ENCODE measurements at regions of chr6 and their contacts with region 1.

Region 1: DNA sequence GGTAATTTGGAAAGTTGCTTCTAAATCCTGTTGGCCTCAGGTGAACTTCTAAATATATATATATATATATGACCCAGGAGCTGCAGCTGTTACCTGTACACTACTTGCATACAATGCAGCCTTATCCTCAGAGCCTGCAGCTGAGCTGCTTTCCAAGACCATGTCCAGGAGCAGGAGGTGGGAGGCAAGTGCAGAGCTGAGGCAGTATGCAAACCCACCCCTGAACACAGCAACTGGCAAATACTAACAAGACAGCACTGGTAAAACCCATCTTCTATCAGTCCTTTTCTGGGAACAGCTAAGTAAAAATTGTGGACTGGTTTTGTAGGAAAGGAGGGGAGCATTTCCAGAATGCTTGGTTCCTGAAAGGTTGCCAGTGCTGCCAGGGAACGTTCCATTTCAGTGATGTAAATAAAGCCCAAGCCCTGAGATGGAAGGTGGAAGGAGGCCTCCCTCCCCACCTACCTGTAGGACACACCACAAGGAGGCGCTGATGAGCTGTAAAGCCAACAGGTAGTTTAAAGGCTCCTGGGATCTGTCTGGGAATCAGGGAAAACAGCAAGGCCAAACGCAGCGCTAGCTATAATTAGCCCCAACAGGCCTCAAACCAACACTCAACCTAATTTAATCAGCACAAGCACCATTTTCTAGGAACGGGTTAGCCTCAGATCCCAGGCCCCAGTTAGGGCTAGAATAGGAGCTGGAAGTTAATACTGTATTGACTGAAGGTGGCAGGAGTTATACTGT is 93.8 kb upstream of the MAP7 start:
- DNase-seq: peak; percentile 67 to 75
- ATAC-seq: peak; percentile 92 to 95
- H3K4me3 ChIP-seq: no peak overlapping the region
- H3K27ac ChIP-seq: peak overlapping the region in 2 of 4 donors; percentile 40 to 65
- H3K4me1 ChIP-seq: peaks cover 8 to 29% of the 10 kb centered on the region in 2 donors
- H3K27me3 ChIP-seq: no peaks in the 10 kb centered on the region
- CTCF ChIP-seq: peak; percentile 61 to 89 (median 82)
- POLR2A ChIP-seq: no peak

Region 2: GRCh38 chr6:136582711-136583471 is 61.1 kb before region 1 on chr6:
- in situ Hi-C with region 1: no loop called
- intact Hi-C with region 1: loop called (anchors 2 kb)
- DNase-seq: no peak
- ATAC-seq: peak; percentile 50 to 69
- H3K4me3 ChIP-seq: no peak overlapping the region
- H3K27ac ChIP-seq: peak overlapping the region in 2 of 4 donors; percentile 9 to 53
- H3K4me1 ChIP-seq: peaks cover 30 to 38% of the 10 kb centered on the region in 2 donors
- H3K27me3 ChIP-seq: no peaks in the 10 kb centered on the region
- CTCF ChIP-seq: peak; percentile 41 to 62 (median 45)
- POLR2A ChIP-seq: no peak

Region 3: GRCh38 chr6:136607932-136608772 is 35.9 kb before region 1 on chr6:
- in situ Hi-C with region 1: no loop called
- intact Hi-C with region 1: loop called (anchors 2 kb)
- DNase-seq: peak in 1 of 2 donors; percentile 53
- ATAC-seq: peak; percentile 82
- H3K4me3 ChIP-seq: no peak overlapping the region
- H3K27ac ChIP-seq: no peak overlapping the region
- H3K4me1 ChIP-seq: peaks cover 0 to 5% of the 10 kb centered on the region in 2 donors
- H3K27me3 ChIP-seq: no peaks in the 10 kb centered on the region
- CTCF ChIP-seq: peak; percentile 23 to 77 (median 71)
- POLR2A ChIP-seq: no peak

Region 4: GRCh38 chr6:136657666-136658065 is 13.6 kb after region 1 on chr6:
- in situ Hi-C with region 1: no loop called
- intact Hi-C with region 1: loop called (anchors 2 kb)
- DNase-seq: no peak
- ATAC-seq: no peak
- H3K4me3 ChIP-seq: no peak overlapping the region
- H3K27ac ChIP-seq: no peak overlapping the region
- H3K4me1 ChIP-seq: no peaks in the 10 kb centered on the region
- H3K27me3 ChIP-seq: no peaks in the 10 kb centered on the region
- CTCF ChIP-seq: no peak
- POLR2A ChIP-seq: no peak

Measured in gastrocnemius medialis (tissue), 4 donors.